IMR-90 (cell line): ENCODE measurements at regions of chr15 and their contacts with region 1.

Region 1: GRCh38 chr15:25863111-25863967 is at the start of gene ATP10A:
- DNase-seq: peak; percentile 71
- ATAC-seq: peak; percentile 63
- H3K4me3 ChIP-seq: peak within 1 kb of the TSS; percentile 84
- H3K27ac ChIP-seq: peak within 1 kb of the TSS; percentile 63
- H3K4me1 ChIP-seq: peaks cover 22% of the 10 kb centered on the region
- H3K27me3 ChIP-seq: no peaks in the 10 kb centered on the region
- CTCF ChIP-seq: no peak
- POLR2A ChIP-seq: no peak
- RAD21 ChIP-seq: peak; percentile 2; the same call in 1 of the 2 replicates
- total RNA-seq, gene ATP10A: 12.8 and 13.8 TPM in 2 replicates

Region 2: GRCh38 chr15:25624504-25625177 is 238.7 kb before region 1 on chr15:
- CTCF ChIA-PET with region 1: no interaction called
- POLR2A ChIA-PET with region 1: no interaction called
- dilution Hi-C with region 1: no loop called
- in situ Hi-C with region 1: no loop called
- intact Hi-C with region 1: no loop called
- DNase-seq: no peak
- ATAC-seq: no peak
- H3K4me3 ChIP-seq: no peak overlapping the region
- H3K27ac ChIP-seq: no peak overlapping the region
- H3K4me1 ChIP-seq: no peaks in the 10 kb centered on the region
- H3K27me3 ChIP-seq: no peaks in the 10 kb centered on the region
- CTCF ChIP-seq: no peak
- POLR2A ChIP-seq: no peak
- RAD21 ChIP-seq: no peak

Region 3: GRCh38 chr15:25693321-25694237 is 169.8 kb before region 1 on chr15:
- CTCF ChIA-PET with region 1: no interaction called
- POLR2A ChIA-PET with region 1: no interaction called
- dilution Hi-C with region 1: no loop called
- in situ Hi-C with region 1: no loop called
- intact Hi-C with region 1: loop called (anchors 5 kb)
- DNase-seq: peak; percentile 24
- ATAC-seq: peak; percentile 90
- H3K4me3 ChIP-seq: no peak overlapping the region
- H3K27ac ChIP-seq: no peak overlapping the region
- H3K4me1 ChIP-seq: peaks cover 4% of the 10 kb centered on the region
- H3K27me3 ChIP-seq: no peaks in the 10 kb centered on the region
- CTCF ChIP-seq: peak; percentile 62
- POLR2A ChIP-seq: no peak
- RAD21 ChIP-seq: peak; percentile 70